HCT116 (cell line): ENCODE measurements at regions of chr16 and their contacts with region 1.

Region 1: DNA sequence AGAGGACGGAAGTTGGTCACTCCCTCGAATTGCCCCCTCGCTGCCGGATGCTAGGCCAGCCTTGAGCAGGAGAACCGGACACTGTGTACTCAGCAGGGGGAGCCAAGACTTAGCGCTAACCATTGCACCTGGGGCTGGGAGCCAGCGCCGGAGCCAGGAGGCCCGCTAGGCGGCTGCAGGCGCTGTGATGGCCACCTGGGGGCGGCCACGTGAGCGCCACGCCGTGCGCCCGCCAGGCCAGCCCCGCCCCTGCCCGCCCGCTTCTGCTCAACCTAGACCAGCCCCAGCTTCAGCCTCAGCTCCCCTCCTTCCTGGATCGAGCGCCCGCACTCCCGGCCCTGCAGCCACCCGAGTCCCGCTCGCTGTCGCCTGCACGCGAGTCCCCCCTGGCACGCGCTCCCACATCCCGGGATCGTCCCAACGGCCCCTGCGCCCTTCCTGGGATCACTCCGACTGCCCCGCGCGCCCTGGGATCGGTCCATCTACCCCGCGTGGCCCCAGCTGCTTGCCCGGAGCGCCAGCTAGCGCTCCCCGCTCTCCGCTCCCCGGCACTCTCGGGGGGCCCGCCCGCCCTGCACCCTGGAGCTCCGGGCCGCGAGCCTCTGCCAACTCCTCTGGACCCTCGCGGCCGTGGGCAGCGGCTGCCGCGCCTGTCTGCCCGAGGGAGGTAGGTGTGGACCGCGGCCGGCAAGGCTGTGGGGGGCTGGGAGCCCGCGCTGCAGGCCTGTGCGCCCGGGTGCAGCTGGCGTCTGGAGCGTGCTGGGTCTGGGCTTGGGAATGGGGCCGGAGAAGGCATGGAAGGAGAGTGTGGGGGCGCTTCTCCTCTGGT is at the start of gene EEF2K:
- DNase-seq: peak; percentile 95
- ATAC-seq: peak; percentile 91
- H3K4me3 ChIP-seq: peak within 1 kb of the TSS; percentile 84 to 94
- H3K27ac ChIP-seq: peak within 1 kb of the TSS; percentile 85
- H3K4me1 ChIP-seq: peaks cover 16 to 25% of the 10 kb centered on the region in 2 experiments
- H3K27me3 ChIP-seq: no peaks in the 10 kb centered on the region
- CTCF ChIP-seq: peak; percentile 61 to 96 (median 62)
- POLR2A ChIP-seq: no peak
- RAD21 ChIP-seq: peak; percentile 80
- total RNA-seq, gene EEF2K: 31.0 TPM

Region 2: GRCh38 chr16:22232277-22233042 is 26.2 kb after region 1 on chr16:
- CTCF ChIA-PET with region 1: no interaction called
- POLR2A ChIA-PET with region 1: no interaction called
- RAD21 ChIA-PET with region 1: no interaction called
- intact Hi-C with region 1: loop called (anchors 2 kb)
- DNase-seq: peak; percentile 92
- ATAC-seq: peak; percentile 94
- H3K4me3 ChIP-seq: peak overlapping the region; percentile 7 to 31
- H3K27ac ChIP-seq: peak overlapping the region; percentile 76
- H3K4me1 ChIP-seq: peaks cover 28 to 32% of the 10 kb centered on the region in 2 experiments
- H3K27me3 ChIP-seq: no peaks in the 10 kb centered on the region
- CTCF ChIP-seq: no peak
- POLR2A ChIP-seq: no peak
- RAD21 ChIP-seq: no peak